Ascending aorta (tissue), 2 donors: ENCODE measurements at regions of chr11 and their contacts with region 1.

Region 1: DNA sequence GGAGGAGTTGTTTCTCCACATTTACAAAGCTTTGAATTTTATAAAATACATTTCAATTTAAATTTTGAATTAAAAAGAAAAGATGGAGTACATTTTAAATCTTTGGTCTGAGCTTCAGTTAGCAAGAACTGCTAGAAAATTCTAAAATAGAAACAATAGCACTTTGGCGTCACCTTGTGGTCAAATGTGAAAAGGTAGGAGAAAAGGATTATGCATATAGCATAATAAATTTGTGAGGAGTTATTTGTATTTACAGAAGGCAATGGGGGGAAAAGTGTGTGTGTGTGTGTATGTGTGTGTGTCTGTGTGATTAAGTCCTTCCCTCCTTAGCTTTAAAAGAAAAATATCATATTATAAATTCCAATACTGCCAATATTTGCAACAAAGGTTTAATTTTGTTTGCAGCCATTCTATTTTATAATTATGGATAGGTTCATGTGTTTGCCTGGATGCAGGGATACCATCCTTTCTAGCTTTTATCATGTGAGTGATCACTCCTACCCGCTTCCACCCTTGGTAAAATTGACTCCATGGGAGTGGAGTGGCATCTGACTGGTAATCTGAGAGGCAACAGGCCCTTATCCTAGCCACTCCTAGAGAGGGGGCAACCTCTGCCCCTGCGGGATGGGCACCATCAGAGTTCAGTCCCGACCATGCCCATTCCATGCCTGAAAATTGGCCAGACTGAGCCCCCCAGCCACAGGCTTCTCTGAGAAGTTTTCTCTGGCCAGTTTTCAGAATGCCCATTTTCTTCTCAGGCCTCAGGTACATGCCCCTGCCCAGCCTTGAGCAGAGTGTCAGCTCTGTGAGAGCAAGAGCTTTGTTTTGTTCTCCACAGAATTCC is 13.6 kb upstream of the LGR4 start:
- DNase-seq: no peak
- H3K4me3 ChIP-seq: no peak overlapping the region
- H3K27ac ChIP-seq: no peak overlapping the region
- H3K4me1 ChIP-seq: no peaks in the 10 kb centered on the region
- H3K27me3 ChIP-seq: no peaks in the 10 kb centered on the region
- CTCF ChIP-seq: peak; percentile 75 to 93 (median 87)

Region 2: DNA sequence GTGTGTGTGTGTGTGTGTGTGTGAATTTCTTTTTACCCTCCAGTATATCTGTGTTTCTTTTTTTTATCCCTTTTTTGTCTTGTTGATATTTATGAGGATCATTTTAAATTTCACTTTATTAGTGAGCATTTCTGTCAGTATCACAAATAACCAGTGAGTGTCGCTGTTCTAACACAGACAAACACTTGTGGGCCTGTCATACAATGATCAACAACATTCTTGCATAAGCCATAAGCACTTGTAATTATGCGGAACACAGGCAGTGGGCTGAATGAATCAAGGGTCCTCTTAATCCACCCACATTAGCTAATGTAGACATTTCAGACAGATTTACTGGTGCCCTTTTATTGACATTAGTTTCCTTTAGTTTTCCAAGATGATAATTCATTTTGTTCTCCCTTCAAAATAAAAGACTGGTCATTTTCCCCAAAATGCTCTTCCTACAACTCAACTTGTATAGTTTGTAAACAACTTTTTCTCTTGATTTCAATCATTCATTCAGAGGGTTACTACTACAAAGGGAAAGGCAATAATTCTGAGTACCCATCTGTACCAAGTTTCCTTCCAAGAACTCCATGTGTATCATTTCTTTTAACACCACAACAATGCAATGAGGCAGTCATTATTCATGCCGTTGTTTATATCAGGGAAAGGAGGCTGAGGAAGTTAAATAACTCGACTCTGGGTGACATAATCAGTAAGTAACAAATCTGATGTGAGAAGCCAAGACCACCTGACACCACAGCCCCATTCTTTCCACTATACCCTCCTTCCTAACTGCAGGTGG is 1188.8 kb before region 1 on chr11:
- intact Hi-C with region 1: loop called (anchors 10 kb)
- DNase-seq: no peak
- H3K4me3 ChIP-seq: no peak overlapping the region
- H3K27ac ChIP-seq: no peak overlapping the region
- H3K4me1 ChIP-seq: no peaks in the 10 kb centered on the region
- H3K27me3 ChIP-seq: no peaks in the 10 kb centered on the region
- CTCF ChIP-seq: peak in 2 of 3 experiments; percentile 30 to 35

Region 3: DNA sequence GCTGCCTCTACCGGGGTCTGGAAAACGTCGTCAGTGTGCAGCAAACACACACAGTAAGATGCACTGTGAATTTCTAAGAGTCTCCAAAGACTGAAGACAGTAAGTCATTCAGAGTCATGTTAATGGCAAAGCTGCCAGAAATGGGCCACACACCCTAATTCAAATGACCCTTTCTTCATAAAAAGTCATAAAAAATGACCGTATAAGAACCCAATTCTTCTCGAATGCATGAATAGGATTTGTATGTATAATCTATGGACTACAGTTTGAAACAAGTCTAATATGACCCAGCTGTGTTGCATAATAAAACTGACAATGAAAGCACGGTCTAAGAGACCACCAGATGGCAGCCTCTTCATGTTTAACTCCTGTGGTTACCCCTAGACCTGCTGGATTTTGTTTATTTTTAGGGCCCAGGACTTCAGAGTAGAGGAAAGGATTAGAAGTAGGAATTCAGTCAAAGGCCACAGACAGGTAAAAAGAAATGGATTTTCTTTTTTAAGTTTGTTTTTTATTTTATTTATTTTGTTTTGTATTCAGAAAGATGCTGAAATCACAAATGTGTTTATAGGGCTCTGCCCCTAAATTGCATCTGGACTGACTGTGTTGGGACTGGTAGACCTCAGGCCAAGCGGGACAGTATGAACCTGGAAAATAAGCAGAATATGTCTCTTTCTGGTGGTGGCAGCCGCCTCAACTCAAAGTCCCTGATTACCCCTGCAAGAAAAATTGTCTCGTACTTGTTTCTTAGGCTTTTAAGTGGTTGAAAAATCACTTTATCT is 732.2 kb before region 1 on chr11:
- intact Hi-C with region 1: loop called (anchors 10 kb)
- DNase-seq: peak in 1 of 2 donors; percentile 79
- H3K4me3 ChIP-seq: no peak overlapping the region
- H3K27ac ChIP-seq: no peak overlapping the region
- H3K4me1 ChIP-seq: peaks cover 0 to 9% of the 10 kb centered on the region in 2 donors
- H3K27me3 ChIP-seq: no peaks in the 10 kb centered on the region
- CTCF ChIP-seq: peak; percentile 61 to 91 (median 81)

Region 4: DNA sequence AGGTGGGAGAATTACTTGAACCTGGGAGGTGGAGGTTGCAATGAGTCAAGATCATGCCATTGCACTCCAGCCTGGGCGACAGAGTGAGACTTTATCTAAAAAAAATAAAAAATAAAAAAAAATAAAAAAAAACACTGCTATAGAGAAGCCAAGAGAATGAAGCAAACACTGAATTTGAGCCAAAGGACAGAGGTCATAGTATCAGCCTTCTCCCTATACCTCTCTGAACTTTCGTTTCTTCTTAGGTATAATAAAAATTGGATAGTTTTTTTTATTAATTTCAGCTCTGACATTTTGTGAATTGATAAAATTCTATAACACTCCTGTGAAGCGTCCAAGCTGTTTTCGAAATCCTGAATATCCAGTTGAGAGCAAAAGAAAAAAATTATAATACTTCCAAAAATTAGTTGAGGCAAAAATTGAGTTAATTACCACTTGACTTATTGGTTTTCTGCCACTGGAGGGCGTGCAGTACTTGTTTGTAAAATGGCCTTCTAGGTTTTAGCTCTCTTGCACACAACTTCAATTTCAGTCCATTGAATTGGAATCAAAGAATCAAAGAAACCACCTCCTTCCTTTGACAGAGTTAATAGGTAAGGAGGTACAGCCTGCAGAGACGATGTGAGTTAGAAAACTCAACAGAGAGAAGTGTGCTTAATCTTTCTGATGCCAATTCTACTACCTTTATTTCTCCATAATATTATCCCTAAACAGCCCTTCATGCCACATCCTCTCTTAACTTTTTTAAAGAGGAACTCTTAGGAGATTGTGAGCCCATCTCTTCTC is 302.3 kb before region 1 on chr11:
- intact Hi-C with region 1: loop called (anchors 1 kb)
- DNase-seq: peak in 1 of 2 donors; percentile 69
- H3K4me3 ChIP-seq: no peak overlapping the region
- H3K27ac ChIP-seq: no peak overlapping the region
- H3K4me1 ChIP-seq: no peaks in the 10 kb centered on the region
- H3K27me3 ChIP-seq: no peaks in the 10 kb centered on the region
- CTCF ChIP-seq: peak; percentile 46 to 77 (median 72)

Region 5: DNA sequence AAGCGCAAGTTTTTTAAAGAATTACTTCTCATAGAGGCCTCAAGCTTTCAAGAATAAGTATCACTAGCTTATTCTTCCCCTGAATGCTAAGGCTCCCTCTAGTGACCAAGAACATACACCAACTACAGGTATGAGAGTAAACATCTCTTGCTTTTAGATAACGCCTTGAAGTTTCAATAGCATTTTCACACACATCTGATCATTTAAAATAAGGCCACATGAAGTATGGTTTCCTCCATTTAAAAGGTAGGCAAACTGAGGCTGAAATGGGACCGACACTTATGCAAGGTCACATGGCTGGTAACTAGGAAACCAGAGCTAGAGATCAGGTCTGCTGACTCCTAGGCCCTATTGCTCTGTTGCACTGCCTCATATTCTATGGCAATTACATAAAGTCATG is 189.7 kb before region 1 on chr11:
- intact Hi-C with region 1: loop called (anchors 5 kb)
- DNase-seq: no peak
- H3K4me3 ChIP-seq: no peak overlapping the region
- H3K27ac ChIP-seq: no peak overlapping the region
- H3K4me1 ChIP-seq: no peaks in the 10 kb centered on the region
- H3K27me3 ChIP-seq: no peaks in the 10 kb centered on the region
- CTCF ChIP-seq: peak; percentile 19 to 60 (median 36)

Region 6: DNA sequence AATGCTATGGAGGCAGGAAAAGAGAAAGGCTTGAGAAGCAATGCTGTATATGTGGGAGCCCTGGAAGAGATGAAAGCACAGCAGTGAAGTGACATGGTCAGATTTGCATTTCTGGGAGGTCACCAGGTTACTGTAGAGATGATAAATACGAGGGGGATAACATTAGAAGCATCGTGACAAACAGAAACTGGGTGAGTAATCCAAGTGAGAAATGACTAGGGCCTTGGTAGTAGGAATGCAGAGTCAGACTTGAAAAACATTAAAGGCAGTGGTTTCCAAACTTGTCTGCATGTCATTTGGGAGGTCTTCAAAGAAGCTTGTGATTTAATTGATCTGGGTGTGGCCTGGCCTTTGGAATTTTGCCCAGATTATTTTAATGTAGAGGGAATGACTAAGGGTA is 167.1 kb before region 1 on chr11:
- intact Hi-C with region 1: no loop called
- DNase-seq: no peak
- H3K4me3 ChIP-seq: no peak overlapping the region
- H3K27ac ChIP-seq: no peak overlapping the region
- H3K4me1 ChIP-seq: no peaks in the 10 kb centered on the region
- H3K27me3 ChIP-seq: no peaks in the 10 kb centered on the region
- CTCF ChIP-seq: no peak

Region 7: DNA sequence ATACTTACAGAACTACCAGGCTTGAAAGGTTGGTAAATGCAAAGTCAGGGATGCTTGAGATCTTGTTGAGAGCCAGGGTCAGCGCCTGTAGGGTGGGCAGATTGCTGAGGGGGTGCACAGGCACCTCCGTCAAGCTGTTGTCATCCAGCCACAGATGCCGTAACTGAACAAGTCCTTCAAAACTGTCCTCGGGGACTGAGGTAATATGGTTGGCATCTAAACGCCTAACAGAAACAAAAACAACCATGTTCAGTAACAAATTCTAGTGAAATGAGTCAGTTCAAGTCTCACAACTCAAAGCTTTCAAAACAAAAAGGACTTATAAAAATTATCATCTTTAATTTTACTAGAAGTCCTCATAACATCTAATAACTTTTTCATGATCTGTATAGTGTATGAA is 100.9 kb before region 1 on chr11:
- intact Hi-C with region 1: loop called (anchors 5 kb)
- DNase-seq: peak in 1 of 2 donors; percentile 77
- H3K4me3 ChIP-seq: peak overlapping the region; percentile 33 to 36
- H3K27ac ChIP-seq: peak overlapping the region; percentile 39 to 55
- H3K4me1 ChIP-seq: peaks cover 0 to 18% of the 10 kb centered on the region in 2 donors
- H3K27me3 ChIP-seq: no peaks in the 10 kb centered on the region
- CTCF ChIP-seq: no peak

Region 8: GRCh38 chr11:28269586-28269985 is 783.4 kb after region 1 on chr11:
- intact Hi-C with region 1: no loop called
- DNase-seq: no peak
- H3K4me3 ChIP-seq: no peak overlapping the region
- H3K27ac ChIP-seq: no peak overlapping the region
- H3K4me1 ChIP-seq: no peaks in the 10 kb centered on the region
- H3K27me3 ChIP-seq: no peaks in the 10 kb centered on the region
- CTCF ChIP-seq: no peak